Ovary (tissue), 10 donors: ENCODE measurements at regions of chr17 and their contacts with region 1.

Region 1: GRCh38 chr17:52975344-52975743 is 816.8 kb upstream of the CA10 start:
- DNase-seq: no peak
- H3K4me3 ChIP-seq: no peak overlapping the region
- H3K27ac ChIP-seq: no peak overlapping the region
- H3K4me1 ChIP-seq: no peaks in the 10 kb centered on the region
- H3K27me3 ChIP-seq: no peaks in the 10 kb centered on the region
- CTCF ChIP-seq: no peak
- EP300 ChIP-seq: no peak
- POLR2A ChIP-seq: no peak

Region 2: GRCh38 chr17:51000835-51001638 is 1974.3 kb before region 1 on chr17:
- intact Hi-C with region 1: no loop called
- DNase-seq: no peak
- H3K4me3 ChIP-seq: no peak overlapping the region
- H3K27ac ChIP-seq: no peak overlapping the region
- H3K4me1 ChIP-seq: no peaks in the 10 kb centered on the region
- H3K27me3 ChIP-seq: no peaks in the 10 kb centered on the region
- CTCF ChIP-seq: peak; percentile 45 to 67 (median 55)
- EP300 ChIP-seq: no peak
- POLR2A ChIP-seq: no peak

Region 3: GRCh38 chr17:53017227-53017626 is 41.9 kb after region 1 on chr17:
- intact Hi-C with region 1: loop called in 1 of 4 experiments (anchors 1 kb)
- DNase-seq: no peak
- H3K4me3 ChIP-seq: no peak overlapping the region
- H3K27ac ChIP-seq: no peak overlapping the region
- H3K4me1 ChIP-seq: no peaks in the 10 kb centered on the region
- H3K27me3 ChIP-seq: no peaks in the 10 kb centered on the region
- CTCF ChIP-seq: no peak
- EP300 ChIP-seq: no peak
- POLR2A ChIP-seq: no peak